ENCODE measurements at regions of chr6 and their contacts with region 1.

Region 1: GRCh38 chr6:32483968-32484636 is 44.4 kb downstream of the HLA-DRA start:
- DNase-seq: no peak
- ATAC-seq: no peak
- H3K4me3 ChIP-seq: no peak overlapping the region
- H3K4me3 Mint-ChIP-seq: no peak overlapping the region
- H3K27ac ChIP-seq: no peak overlapping the region
- H3K27ac Mint-ChIP-seq: no peak overlapping the region
- H3K4me1 ChIP-seq: no peaks in the 10 kb centered on the region
- H3K4me1 Mint-ChIP-seq: no peaks in the 10 kb centered on the region
- H3K27me3 ChIP-seq: no peaks in the 10 kb centered on the region
- H3K27me3 Mint-ChIP-seq: peaks cover 24% of the 10 kb centered on the region
- CTCF ChIP-seq: no peak

Region 2: GRCh38 chr6:32439602-32440214 is 44.4 kb before region 1 on chr6 and contains the start of gene HLA-DRA:
- CTCF ChIA-PET with region 1: no interaction called
- POLR2A ChIA-PET with region 1: no interaction called
- intact Hi-C with region 1: no loop called
- DNase-seq: peak in 5 of 14 experiments; percentile 8 to 87 (median 84)
- ATAC-seq: peak; percentile 85
- H3K4me3 ChIP-seq: peak within 1 kb of the TSS; percentile 51
- H3K4me3 Mint-ChIP-seq: peak within 1 kb of the TSS; percentile 62
- H3K27ac ChIP-seq: peak within 1 kb of the TSS in 1 of 2 donors; percentile 32
- H3K27ac Mint-ChIP-seq: no peak within 1 kb of the TSS
- H3K4me1 ChIP-seq: peaks cover 7% of the 10 kb centered on the region
- H3K4me1 Mint-ChIP-seq: peaks cover 9% of the 10 kb centered on the region
- H3K27me3 ChIP-seq: no peaks in the 10 kb centered on the region
- H3K27me3 Mint-ChIP-seq: peaks cover 42% of the 10 kb centered on the region
- CTCF ChIP-seq: no peak
- total RNA-seq, gene HLA-DRA: 50.3 to 51.0 TPM

Region 3: DNA sequence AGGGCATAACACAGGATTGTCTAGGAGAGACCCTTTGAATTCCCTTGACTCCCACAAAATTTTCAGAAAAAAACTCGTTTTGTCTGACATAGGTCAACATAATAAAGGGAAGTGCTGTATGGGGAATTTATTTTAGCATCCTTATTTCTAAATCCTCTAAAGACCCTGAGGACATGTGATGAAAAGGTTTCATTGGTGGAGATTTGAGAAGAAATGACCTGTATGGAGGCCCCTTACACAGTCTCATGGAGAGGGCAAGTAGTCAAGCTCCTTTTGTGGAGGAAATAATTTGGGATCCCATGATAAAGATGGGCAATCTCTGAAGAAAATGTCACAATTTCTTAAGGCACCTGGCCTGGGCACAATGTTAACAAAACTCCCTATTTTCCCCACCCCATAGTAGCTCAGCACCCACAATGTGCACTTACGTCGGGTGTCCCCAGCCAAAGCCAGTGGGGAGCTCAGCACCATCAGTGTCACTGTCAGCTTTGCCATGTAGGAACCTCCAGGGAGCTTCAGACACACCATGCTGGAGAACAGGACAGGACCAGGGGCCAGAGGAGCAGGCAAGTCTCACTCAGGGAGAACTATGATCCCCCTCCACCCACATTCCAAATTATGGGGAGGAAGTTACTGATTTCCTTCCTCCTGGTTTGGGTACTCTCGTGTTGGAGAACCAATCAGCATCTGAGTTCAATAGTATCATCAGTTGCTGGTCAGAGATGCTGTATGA is 45.8 kb after region 1 on chr6 and contains the start of gene HLA-DRB5:
- CTCF ChIA-PET with region 1: no interaction called
- POLR2A ChIA-PET with region 1: no interaction called
- intact Hi-C with region 1: loop called (anchors 1 to 2 kb)
- DNase-seq: peak in 5 of 14 experiments; percentile 0 to 56 (median 49)
- ATAC-seq: peak; percentile 43
- H3K4me3 ChIP-seq: peak within 1 kb of the TSS; percentile 43
- H3K4me3 Mint-ChIP-seq: peak within 1 kb of the TSS; percentile 22
- H3K27ac ChIP-seq: no peak within 1 kb of the TSS
- H3K27ac Mint-ChIP-seq: no peak within 1 kb of the TSS
- H3K4me1 ChIP-seq: no peaks in the 10 kb centered on the region
- H3K4me1 Mint-ChIP-seq: no peaks in the 10 kb centered on the region
- H3K27me3 ChIP-seq: no peaks in the 10 kb centered on the region
- H3K27me3 Mint-ChIP-seq: peaks cover 4% of the 10 kb centered on the region
- CTCF ChIP-seq: no peak
- total RNA-seq, gene HLA-DRB5: 12.5 to 12.6 TPM

Region 4: DNA sequence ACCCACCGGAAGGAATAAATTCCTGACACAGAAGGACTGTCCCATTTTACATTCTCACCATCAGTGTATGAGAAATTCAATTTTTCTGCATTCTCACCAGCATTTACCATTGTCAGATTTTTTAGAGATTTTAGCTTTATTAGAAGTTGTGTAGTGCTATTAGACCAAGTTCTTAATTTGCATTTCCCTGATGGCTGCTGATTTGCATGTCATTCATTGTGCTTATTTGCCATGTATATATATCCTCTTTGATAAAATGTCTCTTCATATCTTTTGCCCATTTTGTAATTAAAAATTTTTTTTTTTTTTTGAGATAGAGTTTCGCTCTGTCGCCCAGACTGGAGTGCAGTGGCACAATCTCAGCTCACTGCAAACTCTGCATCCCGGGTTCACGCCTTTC is 55.7 kb after region 1 on chr6:
- CTCF ChIA-PET with region 1: no interaction called
- POLR2A ChIA-PET with region 1: no interaction called
- intact Hi-C with region 1: loop called (anchors 1 to 2 kb)
- DNase-seq: no peak
- ATAC-seq: no peak
- H3K4me3 ChIP-seq: no peak overlapping the region
- H3K4me3 Mint-ChIP-seq: no peak overlapping the region
- H3K27ac ChIP-seq: no peak overlapping the region
- H3K27ac Mint-ChIP-seq: no peak overlapping the region
- H3K4me1 ChIP-seq: no peaks in the 10 kb centered on the region
- H3K4me1 Mint-ChIP-seq: no peaks in the 10 kb centered on the region
- H3K27me3 ChIP-seq: no peaks in the 10 kb centered on the region
- H3K27me3 Mint-ChIP-seq: peaks cover 5% of the 10 kb centered on the region
- CTCF ChIP-seq: no peak

Region 5: DNA sequence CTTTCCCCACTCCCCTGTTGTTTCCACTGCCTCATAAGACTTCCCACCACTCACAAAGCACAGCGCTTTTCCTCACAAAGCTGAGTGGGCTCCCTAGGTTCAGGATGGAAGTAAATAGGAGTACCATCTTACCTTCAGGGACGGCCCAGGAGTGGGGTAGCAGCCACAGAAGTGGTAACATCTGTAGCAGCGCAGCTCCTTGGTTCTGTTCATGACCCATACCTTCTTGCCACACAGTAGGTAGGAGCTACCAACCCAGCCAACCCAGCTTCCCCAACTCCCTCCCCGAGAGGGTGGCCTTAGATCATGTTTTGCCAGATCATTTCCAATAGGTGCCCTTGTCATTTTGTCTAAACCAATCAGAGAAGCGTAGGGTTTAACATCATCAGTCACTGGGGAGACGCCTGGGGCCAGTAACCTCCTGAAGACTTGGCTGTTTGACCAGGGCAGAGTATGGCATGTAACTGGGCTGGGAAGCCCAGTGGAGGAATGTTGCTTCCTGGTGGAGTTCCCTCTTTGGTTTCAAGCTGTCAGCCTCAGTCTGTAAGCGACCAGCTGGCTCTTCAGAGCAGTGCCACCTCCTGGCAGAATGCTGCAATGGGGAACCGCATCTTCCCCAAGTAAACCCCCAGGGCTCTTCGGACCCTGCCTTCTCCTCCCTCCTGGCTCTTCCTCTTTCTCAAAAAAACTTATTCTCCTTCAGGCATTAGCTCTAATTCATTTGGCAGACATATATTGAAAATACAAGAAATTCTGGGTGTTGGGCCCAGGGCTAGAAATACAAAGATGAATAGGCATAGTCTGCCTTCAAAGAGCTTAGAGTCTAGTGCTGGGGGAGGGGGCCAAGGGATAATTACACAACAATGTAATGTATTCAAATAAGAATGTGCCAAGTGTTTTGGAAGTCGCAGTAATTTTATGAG is 469.0 kb after region 1 on chr6 and contains the start of gene HLA-DMA:
- CTCF ChIA-PET with region 1: no interaction called
- POLR2A ChIA-PET with region 1: no interaction called
- intact Hi-C with region 1: no loop called
- DNase-seq: peak; percentile 57 to 92 (median 70)
- ATAC-seq: peak; percentile 98
- H3K4me3 ChIP-seq: peak within 1 kb of the TSS; percentile 49
- H3K4me3 Mint-ChIP-seq: peak within 1 kb of the TSS; percentile 71
- H3K27ac ChIP-seq: peak within 1 kb of the TSS; percentile 5 to 44
- H3K27ac Mint-ChIP-seq: peak within 1 kb of the TSS; percentile 82
- H3K4me1 ChIP-seq: peaks cover 26% of the 10 kb centered on the region
- H3K4me1 Mint-ChIP-seq: peaks cover 45% of the 10 kb centered on the region
- H3K27me3 ChIP-seq: no peaks in the 10 kb centered on the region
- H3K27me3 Mint-ChIP-seq: no peaks in the 10 kb centered on the region
- CTCF ChIP-seq: peak; percentile 86
- total RNA-seq, gene HLA-DMA: 14.4 to 16.5 TPM

Measured in CD4-positive, alpha-beta T cell (primary cell).